Breast epithelium (tissue), 4 donors: ENCODE measurements at regions of chr18 and their contacts with region 1.

Region 1: DNA sequence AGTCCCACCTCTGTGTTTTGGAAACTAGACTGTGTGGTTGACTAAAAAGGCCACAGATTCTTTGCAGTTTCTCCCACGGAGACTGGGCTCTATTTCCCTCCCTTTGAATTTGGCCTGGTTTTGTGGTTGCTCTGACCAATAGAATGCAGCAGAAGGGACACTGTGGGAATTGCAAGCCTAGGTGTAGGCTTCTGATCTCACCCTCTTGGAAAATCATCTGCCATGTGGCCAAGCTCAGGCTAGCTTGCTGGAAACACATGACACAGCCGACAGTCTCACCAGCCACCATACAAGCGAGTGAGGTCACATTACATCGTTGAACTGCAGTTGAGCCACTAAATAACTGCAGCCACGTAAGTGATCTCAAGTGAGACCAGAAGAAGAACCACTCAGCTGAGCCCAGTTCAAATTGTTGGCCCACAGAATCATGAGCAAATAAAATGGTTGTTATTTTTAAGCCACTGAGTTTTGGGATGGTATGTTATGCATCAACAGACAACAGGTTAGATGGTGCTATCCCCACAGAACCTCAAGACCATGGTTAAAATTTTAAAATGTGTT is 319.1 kb upstream of the MEX3C start:
- DNase-seq: no peak
- H3K4me3 ChIP-seq: no peak overlapping the region
- H3K27ac ChIP-seq: no peak overlapping the region
- H3K4me1 ChIP-seq: no peaks in the 10 kb centered on the region
- H3K27me3 ChIP-seq: no peaks in the 10 kb centered on the region
- CTCF ChIP-seq: no peak
- POLR2A ChIP-seq: no peak

Region 2: GRCh38 chr18:51437280-51438271 is 79.0 kb before region 1 on chr18:
- intact Hi-C with region 1: no loop called
- DNase-seq: no peak
- H3K4me3 ChIP-seq: no peak overlapping the region
- H3K27ac ChIP-seq: no peak overlapping the region
- H3K4me1 ChIP-seq: no peaks in the 10 kb centered on the region
- H3K27me3 ChIP-seq: no peaks in the 10 kb centered on the region
- CTCF ChIP-seq: no peak
- POLR2A ChIP-seq: no peak

Region 3: GRCh38 chr18:51537487-51537886 is 20.9 kb after region 1 on chr18:
- intact Hi-C with region 1: loop called (anchors 2 kb)
- DNase-seq: peak in 1 of 2 donors; percentile 50
- H3K4me3 ChIP-seq: no peak overlapping the region
- H3K27ac ChIP-seq: no peak overlapping the region
- H3K4me1 ChIP-seq: no peaks in the 10 kb centered on the region
- H3K27me3 ChIP-seq: no peaks in the 10 kb centered on the region
- CTCF ChIP-seq: peak in 1 of 3 donors; percentile 32
- POLR2A ChIP-seq: no peak